Esophagus muscularis mucosa (tissue), 4 donors: ENCODE measurements at regions of chr4 and their contacts with region 1.

Region 1: DNA sequence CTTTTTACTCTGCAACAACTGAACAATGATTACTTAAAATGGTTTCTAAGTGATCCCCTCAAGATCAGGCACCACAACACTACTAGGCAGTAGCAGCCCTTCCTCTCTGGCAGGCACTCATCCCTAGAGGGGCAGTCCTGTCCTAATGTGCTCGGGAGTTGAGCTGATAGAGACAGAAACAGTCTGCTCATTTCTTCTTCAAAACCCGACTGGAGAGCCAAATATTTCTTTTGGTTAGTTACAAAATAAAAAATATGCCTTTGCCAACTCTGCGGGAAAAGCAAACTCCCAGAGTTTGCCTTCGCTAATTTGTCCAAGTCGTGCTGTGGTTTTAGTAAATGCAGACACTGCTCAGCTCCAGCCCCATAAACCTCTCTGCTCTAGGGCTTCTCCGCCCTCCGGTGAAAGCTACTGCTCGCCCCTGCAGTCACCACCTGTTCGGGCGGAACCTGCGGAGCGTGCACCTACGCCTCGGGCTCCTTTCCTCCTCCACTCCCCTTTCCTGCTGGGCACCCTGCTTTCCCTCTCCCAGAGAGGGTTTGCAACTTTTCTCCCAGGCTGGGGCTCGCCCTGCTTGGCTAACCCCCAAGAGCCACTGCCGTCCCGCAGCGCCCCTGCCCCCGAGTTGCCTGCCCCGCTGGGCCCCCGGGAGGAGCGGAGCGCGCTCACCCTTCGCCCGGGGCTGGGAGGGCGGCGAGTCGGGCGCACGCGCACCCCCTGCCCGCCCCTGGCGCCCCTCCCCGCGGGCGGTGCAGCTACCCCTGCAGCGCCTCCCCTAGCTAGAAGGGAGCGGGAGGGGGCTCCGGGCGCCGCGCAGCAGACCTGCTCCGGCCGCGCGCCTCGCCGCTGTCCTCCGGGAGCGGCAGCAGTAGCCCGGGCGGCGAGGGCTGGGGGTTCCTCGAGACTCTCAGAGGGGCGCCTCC is at the start of gene NPNT:
- DNase-seq: no peak
- H3K4me3 ChIP-seq: peak within 1 kb of the TSS; percentile 67 to 85 (median 71)
- H3K27ac ChIP-seq: peak within 1 kb of the TSS; percentile 68 to 88 (median 78)
- H3K4me1 ChIP-seq: peaks cover 4 to 48% (median 26%) of the 10 kb centered on the region in 4 donors
- H3K27me3 ChIP-seq: peaks cover 0 to 17% (median 3%) of the 10 kb centered on the region in 4 donors
- CTCF ChIP-seq: peak in 1 of 3 experiments; percentile 7
- EP300 ChIP-seq: no peak
- POLR2A ChIP-seq: no peak
- total RNA-seq, gene NPNT: 43.2 to 87.0 (median 59.4) TPM

Region 2: DNA sequence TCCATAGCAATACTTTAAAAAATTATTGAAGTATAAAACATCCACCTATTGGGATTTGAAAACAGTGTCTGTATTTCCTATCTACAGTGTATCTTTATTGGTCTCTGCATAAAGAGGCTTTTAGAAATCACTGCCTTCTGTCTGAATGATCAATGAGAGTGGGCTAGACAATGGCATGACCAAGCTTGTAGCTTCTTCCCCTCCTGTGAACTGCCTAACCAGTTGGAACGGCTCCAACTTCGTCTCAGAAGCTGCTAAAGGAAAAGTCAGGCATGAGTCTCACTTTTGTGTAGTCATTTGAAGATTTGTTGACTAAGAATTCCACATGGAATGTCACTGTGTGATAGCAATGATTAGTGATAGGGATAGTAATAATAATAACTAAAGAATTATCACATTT is 250.7 kb before region 1 on chr4:
- intact Hi-C with region 1: no loop called
- DNase-seq: no peak
- H3K4me3 ChIP-seq: no peak overlapping the region
- H3K27ac ChIP-seq: no peak overlapping the region
- H3K4me1 ChIP-seq: no peaks in the 10 kb centered on the region
- H3K27me3 ChIP-seq: no peaks in the 10 kb centered on the region
- CTCF ChIP-seq: no peak
- EP300 ChIP-seq: no peak
- POLR2A ChIP-seq: no peak

Region 3: DNA sequence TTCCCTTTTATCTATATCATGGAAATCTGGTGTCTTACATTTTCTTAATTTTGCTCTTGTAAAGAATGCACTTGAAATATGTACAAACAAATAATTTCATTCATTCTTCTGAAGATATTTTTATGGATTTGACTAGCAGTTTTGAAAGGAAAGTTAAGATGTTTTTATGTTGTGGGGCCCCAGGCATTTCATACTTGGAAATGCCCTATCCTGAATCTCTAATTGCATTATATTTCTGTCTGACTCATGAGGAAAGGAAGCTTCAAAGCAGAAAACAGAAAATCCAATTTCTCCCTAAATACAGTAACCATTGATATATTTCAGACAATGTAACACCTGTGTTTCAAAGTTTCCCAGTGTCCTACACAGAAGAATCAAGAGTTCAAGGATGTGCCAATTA is 72.9 kb before region 1 on chr4:
- intact Hi-C with region 1: loop called (anchors 5 kb)
- DNase-seq: no peak
- H3K4me3 ChIP-seq: no peak overlapping the region
- H3K27ac ChIP-seq: no peak overlapping the region
- H3K4me1 ChIP-seq: peaks cover 0 to 10% (median 4%) of the 10 kb centered on the region in 4 donors
- H3K27me3 ChIP-seq: no peaks in the 10 kb centered on the region
- CTCF ChIP-seq: no peak
- EP300 ChIP-seq: no peak
- POLR2A ChIP-seq: no peak